BJ (cell line): ENCODE measurements at regions of chr6 and their contacts with region 1.

Region 1: GRCh38 chr6:99568103-99568933 is at the start of gene CCNC:
- DNase-seq: peak; percentile 76
- H3K4me3 ChIP-seq: peak within 1 kb of the TSS; percentile 99
- H3K27me3 ChIP-seq: no peaks in the 10 kb centered on the region
- CTCF ChIP-seq: no peak
- polyA plus RNA-seq, gene CCNC: 32.3 and 44.8 TPM in 2 replicates

Region 2: GRCh38 chr6:99588618-99589289 is 20.4 kb after region 1 on chr6:
- CTCF ChIA-PET with region 1: interaction called, 5 read pairs
- POLR2A ChIA-PET with region 1: interaction called, 34 read pairs
- DNase-seq: no peak
- H3K4me3 ChIP-seq: peak overlapping the region; percentile 45
- H3K27me3 ChIP-seq: peaks cover 34% of the 10 kb centered on the region
- CTCF ChIP-seq: peak; percentile 58